ENCODE measurements at regions of chr15 and their contacts with region 1.

Region 1: DNA sequence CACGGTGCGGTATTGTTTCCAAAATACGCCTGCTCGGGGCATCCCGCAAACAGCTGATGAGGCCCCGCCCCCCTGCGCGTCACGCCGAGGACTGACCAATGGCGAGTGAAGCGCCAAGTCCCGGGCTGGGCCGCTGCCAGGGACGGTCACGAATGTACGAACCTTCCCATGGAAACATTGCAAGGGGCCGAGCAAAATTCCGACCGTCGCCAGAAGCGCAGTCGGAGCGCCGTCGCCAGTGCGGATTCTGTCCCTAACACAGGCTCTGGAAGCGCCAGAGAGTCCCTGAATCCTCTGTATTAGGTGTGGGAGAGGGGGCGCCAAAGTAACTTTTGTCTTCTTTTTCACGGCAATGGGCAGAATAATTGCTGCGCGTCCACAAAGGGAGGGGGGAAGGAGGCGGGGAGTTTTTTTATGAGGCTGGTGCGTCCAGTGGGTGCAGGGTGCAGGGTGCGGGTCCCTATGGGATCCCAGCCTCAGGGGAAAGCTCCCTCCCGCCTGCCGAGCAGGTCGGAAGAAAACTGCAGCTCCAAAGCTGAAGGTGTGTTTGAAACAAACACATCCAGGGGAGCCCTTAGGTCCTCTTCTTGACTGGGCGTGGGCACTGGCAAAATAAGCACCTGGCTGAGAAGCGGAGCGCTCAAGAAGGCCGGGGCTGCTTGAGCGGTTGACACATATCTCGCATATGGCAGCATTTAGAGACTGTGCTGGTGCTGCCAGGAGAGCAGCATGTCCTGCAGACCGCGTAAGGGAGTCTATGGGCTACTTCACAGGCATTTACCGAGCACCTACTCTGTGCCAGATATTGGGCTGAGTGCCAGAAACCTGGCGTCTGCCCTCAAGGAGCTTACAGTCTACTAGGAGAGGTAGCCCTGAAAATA is at the start of gene BMF:
- DNase-seq: peak; percentile 98
- ATAC-seq: peak; percentile 51
- H3K4me3 Mint-ChIP-seq: peak within 1 kb of the TSS; percentile 78
- H3K27ac Mint-ChIP-seq: peak within 1 kb of the TSS; percentile 76
- H3K4me1 Mint-ChIP-seq: peaks cover 48% of the 10 kb centered on the region
- H3K27me3 Mint-ChIP-seq: peaks cover 2% of the 10 kb centered on the region
- total RNA-seq, gene BMF: 7.6 to 8.4 TPM

Region 2: DNA sequence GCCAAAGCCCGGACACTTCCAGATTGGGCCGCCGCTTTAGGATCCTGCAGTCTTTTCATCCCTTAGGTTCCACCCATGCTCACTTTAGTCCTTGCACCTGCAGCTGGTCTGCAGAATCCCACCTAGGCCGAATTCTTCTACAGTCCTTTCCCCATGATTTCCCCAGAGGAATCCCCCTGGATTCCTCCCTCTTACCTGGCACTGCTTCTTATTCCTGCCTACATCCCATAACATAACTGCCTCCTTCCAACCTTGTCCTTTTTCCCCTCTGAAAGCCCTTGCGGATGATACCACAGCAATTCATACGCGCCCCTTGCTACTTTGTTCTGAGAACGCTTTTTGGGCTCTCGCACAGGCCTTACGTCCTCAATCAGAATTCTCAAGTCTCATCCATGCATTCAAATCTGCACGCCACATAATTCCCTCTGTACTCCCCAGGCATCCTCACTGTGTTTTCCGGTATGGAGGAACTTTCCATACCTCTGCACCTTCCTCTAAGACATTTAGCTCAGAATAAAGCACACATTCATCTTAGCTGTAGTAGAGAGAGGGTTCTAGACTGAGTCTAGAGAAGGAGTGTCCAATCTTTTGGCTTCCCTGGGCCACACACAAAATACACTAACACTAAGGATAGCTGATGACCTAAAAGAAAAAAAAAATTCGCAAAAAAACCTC is 174.6 kb before region 1 on chr15:
- CTCF ChIA-PET with region 1: interaction called, 3 read pairs
- POLR2A ChIA-PET with region 1: no interaction called
- intact Hi-C with region 1: loop called in 1 of 2 experiments (anchors 5 kb)
- DNase-seq: peak; percentile 24
- ATAC-seq: no peak
- H3K4me3 Mint-ChIP-seq: peak overlapping the region; percentile 95
- H3K27ac Mint-ChIP-seq: peak overlapping the region; percentile 83
- H3K4me1 Mint-ChIP-seq: peaks cover 41% of the 10 kb centered on the region
- H3K27me3 Mint-ChIP-seq: no peaks in the 10 kb centered on the region

Region 3: GRCh38 chr15:40002295-40002694 is 106.8 kb before region 1 on chr15:
- CTCF ChIA-PET with region 1: no interaction called
- POLR2A ChIA-PET with region 1: no interaction called
- intact Hi-C with region 1: no loop called
- DNase-seq: no peak
- ATAC-seq: no peak
- H3K4me3 Mint-ChIP-seq: no peak overlapping the region
- H3K27ac Mint-ChIP-seq: no peak overlapping the region
- H3K4me1 Mint-ChIP-seq: no peaks in the 10 kb centered on the region
- H3K27me3 Mint-ChIP-seq: no peaks in the 10 kb centered on the region

Region 4: DNA sequence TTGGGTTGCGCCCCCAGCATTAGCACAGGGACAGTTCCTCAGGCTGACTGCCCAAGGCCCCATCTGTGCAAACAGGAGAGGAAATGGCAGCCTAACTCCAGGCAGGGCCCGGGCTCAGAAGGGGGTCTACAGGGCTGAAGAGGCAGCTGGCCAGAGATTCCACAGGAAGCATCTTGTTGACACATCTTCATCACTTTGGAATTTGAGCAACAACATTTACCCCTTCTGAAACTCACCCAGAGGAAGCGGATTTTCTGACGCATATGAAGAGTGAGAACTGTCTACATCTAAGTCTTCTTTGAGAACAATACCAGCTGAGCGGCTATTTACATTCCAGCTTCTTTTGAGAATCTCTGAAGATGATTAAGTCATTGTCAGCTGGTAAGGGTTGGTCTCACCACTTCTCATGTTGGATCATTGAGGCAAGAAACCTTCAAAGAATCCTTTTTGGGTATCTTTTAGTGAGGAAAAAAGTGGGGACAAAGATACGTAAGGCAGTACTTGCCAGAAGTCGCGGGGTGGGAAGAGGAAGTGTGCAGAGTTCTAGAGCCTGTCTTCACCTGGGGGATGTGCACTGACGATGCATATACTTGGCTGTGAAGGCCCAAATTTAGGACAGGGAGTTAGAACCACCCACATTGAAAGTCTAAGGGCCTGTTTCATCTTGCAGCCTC is 44.7 kb before region 1 on chr15:
- CTCF ChIA-PET with region 1: interaction called, 18 read pairs
- POLR2A ChIA-PET with region 1: interaction called, 4 read pairs
- intact Hi-C with region 1: loop called in 1 of 2 experiments (anchors 5 kb)
- DNase-seq: peak; percentile 46
- ATAC-seq: peak; percentile 73
- H3K4me3 Mint-ChIP-seq: no peak overlapping the region
- H3K27ac Mint-ChIP-seq: peak overlapping the region; percentile 66
- H3K4me1 Mint-ChIP-seq: peaks cover 22% of the 10 kb centered on the region
- H3K27me3 Mint-ChIP-seq: no peaks in the 10 kb centered on the region

Region 5: DNA sequence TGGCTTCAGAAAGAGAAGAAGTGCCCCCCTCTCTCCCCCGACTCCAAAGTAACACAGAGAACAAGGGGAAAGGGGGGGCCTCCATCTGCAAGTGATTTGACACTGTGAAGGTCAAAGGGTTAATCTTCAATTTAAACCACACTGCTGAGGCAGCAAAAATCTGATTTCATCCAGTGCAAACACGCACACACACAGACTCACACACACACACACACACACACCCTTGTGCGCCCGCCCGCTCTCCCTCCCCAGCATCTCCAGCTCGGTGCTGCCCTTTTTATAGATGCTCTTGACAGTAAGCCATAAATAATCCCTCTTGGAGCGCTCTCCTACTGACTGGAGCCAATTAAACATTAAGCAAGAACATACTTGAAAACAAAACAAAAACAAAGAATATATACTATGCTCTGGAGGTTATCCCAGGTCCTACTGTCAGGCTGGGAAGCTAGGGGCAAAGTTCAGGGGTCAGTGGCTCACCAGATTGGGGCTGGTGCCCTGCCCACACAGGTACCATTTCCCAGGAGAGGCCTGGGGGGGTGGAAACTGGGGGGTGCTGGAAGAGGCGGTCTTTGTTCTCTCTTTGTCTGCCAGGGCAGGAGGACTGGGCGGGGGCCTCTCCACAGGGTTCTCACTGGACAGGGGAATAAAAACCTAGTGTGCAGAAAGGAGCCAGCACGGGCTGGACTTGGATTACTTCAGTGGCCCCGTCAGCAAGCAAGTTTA is 16.7 kb before region 1 on chr15:
- CTCF ChIA-PET with region 1: interaction called, 85 read pairs
- POLR2A ChIA-PET with region 1: interaction called, 17 read pairs
- intact Hi-C with region 1: no loop called
- DNase-seq: no peak
- ATAC-seq: no peak
- H3K4me3 Mint-ChIP-seq: no peak overlapping the region
- H3K27ac Mint-ChIP-seq: peak overlapping the region; percentile 9
- H3K4me1 Mint-ChIP-seq: peaks cover 27% of the 10 kb centered on the region
- H3K27me3 Mint-ChIP-seq: no peaks in the 10 kb centered on the region

Region 6: GRCh38 chr15:40160689-40161688 is 51.9 kb after region 1 on chr15 and contains the start of gene BUB1B:
- CTCF ChIA-PET with region 1: interaction called, 8 read pairs
- POLR2A ChIA-PET with region 1: interaction called, 3 read pairs
- intact Hi-C with region 1: loop called (anchors 1 kb)
- DNase-seq: peak; percentile 96
- ATAC-seq: peak; percentile 95
- H3K4me3 Mint-ChIP-seq: no peak within 1 kb of the TSS
- H3K27ac Mint-ChIP-seq: no peak within 1 kb of the TSS
- H3K4me1 Mint-ChIP-seq: peaks cover 8% of the 10 kb centered on the region
- H3K27me3 Mint-ChIP-seq: no peaks in the 10 kb centered on the region
- total RNA-seq, gene BUB1B: 95.3 to 99.5 TPM